HEK293 (cell line): ENCODE measurements at regions of chr19 and their contacts with region 1.

Region 1: GRCh38 chr19:47391510-47392223 is 27.7 kb downstream of the MEIS3 start:
- H3K4me3 ChIP-seq: no peak overlapping the region
- H3K27ac ChIP-seq: no peak overlapping the region
- H3K4me1 ChIP-seq: no peaks in the 10 kb centered on the region
- CTCF ChIP-seq: peak; percentile 60; the same call in 1 of the 2 replicates

Region 2: GRCh38 chr19:47284324-47284899 is 107.3 kb before region 1 on chr19:
- CTCF ChIA-PET with region 1: interaction called, 33 read pairs
- POLR2A ChIA-PET with region 1: no interaction called
- H3K4me3 ChIP-seq: no peak overlapping the region
- H3K27ac ChIP-seq: no peak overlapping the region
- H3K4me1 ChIP-seq: peaks cover 6% of the 10 kb centered on the region; the same call in 1 of the 2 replicates
- CTCF ChIP-seq: peak; percentile 66

Region 3: DNA sequence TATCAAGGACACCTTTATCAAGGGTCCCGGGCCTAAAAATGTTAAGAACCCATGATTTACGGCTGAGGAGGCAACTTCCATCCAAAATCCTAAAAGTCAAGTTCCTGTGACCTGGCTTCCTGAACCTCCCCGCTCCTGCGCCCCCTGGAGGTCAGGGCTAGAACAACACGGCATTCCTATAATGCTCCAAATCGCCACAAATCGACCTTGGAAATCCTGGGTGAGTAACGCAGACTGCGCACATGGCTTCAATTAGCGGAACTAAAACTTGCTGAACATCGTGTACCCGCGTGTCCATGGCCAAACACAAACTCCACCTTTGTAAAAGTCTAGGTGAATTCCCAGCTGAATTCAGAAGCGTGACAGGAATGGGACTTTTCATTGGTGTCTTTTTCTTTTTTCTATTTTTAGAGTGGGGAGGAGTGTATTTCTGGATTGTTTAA is 86.3 kb before region 1 on chr19:
- CTCF ChIA-PET with region 1: interaction called, 13 read pairs
- POLR2A ChIA-PET with region 1: no interaction called
- H3K4me3 ChIP-seq: no peak overlapping the region; the same call in 1 of the 2 replicates
- H3K27ac ChIP-seq: no peak overlapping the region
- H3K4me1 ChIP-seq: no peaks in the 10 kb centered on the region
- CTCF ChIP-seq: peak; percentile 75

Region 4: GRCh38 chr19:47370045-47370611 is 21.5 kb before region 1 on chr19:
- CTCF ChIA-PET with region 1: interaction called, 17 read pairs
- POLR2A ChIA-PET with region 1: no interaction called
- H3K4me3 ChIP-seq: no peak overlapping the region
- H3K27ac ChIP-seq: 0 out of 2 replicates have a peak overlapping the region, but pooled peaks have one; percentile 5
- H3K4me1 ChIP-seq: no peaks in the 10 kb centered on the region
- CTCF ChIP-seq: no peak

Region 5: DNA sequence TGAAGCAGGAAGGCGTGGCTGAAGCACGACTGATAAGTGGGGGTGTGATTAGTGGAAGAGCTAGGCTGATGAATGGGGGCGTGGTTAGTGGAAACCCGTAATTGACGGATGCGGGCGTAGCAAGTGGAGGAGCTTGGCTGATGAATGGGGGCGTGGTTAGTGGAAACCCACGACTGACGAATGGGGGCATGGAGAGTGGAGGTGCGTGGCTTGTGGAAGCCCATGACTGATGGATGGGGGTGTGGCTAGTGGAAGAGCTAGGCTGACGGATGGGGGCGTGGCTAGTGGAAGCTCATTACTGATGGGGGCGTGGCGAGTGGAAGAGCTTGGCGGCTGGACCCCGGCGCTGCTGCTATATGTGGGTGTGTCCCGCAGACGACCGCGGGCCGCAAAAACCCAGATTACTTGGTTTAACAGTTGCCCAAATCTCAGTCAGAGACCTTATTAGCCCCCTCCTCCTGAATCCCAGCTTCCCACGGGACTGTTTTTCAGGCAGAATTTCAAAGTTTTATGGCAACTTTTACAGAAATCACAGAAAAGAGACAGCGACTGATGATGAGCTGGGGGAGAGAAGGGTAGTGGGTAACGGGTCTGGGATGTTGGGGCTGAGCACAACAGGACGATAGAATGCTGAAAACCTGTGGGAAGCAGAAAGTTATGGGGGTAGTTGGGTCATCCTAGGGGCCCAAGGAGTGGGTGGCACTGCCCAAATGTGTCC is 36.7 kb after region 1 on chr19:
- CTCF ChIA-PET with region 1: interaction called, 20 read pairs
- POLR2A ChIA-PET with region 1: interaction called, 6 read pairs
- H3K4me3 ChIP-seq: peak overlapping the region; percentile 4; the same call in 1 of the 2 replicates
- H3K27ac ChIP-seq: no peak overlapping the region
- H3K4me1 ChIP-seq: peaks cover 10% of the 10 kb centered on the region
- CTCF ChIP-seq: no peak